Activated CD4-positive, alpha-beta T cell treated with anti-CD3 and anti-CD28 coated beads for 36 hours (primary cell): ENCODE measurements at regions of chr17 and their contacts with region 1.

Region 1: DNA sequence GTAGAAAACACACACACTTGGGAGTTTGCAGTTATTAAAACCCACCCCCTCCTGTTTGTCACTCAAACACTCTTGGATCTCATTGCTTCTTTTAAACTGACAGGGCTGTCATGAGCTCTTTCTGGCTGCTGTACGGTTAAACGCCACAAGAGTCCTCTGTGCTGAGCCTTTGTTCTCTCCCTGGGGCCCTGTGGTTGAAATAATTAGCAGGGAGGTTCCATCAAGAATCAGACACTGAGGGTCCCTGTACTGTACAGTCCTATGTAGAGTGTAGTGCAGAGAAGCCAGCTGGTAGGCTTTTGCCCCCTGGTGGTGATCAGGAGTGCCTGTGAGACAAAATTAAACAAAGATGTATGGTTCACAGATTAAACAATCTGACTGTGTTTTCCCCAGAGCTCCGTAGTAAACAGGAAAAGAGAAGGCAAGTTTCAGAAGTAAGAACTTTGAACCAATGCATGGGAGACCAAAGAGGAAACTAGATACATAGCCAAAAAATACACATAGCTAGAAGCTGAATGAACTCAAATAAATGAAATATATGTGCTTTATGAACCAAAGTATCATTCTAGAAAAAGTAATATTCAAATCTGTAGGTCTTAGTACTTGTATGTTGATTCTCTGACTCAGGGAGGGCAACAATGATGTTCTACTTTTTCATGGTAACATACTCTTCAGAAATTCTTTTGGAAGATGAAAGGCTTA is 1.4 kb upstream of the SSH2 start:
- DNase-seq: peak; percentile 80
- ATAC-seq: peak; percentile 66
- H3K4me3 Mint-ChIP-seq: no peak overlapping the region
- H3K27ac Mint-ChIP-seq: no peak overlapping the region
- H3K4me1 Mint-ChIP-seq: peaks cover 20% of the 10 kb centered on the region
- H3K27me3 Mint-ChIP-seq: no peaks in the 10 kb centered on the region

Region 2: GRCh38 chr17:29568331-29569244 is 362.8 kb before region 1 on chr17 and contains the start of gene TP53I13:
- CTCF ChIA-PET with region 1: interaction called, 3 read pairs
- POLR2A ChIA-PET with region 1: no interaction called
- intact Hi-C with region 1: loop called in 1 of 2 experiments (anchors 1 kb)
- DNase-seq: peak; percentile 96
- ATAC-seq: peak; percentile 64
- H3K4me3 Mint-ChIP-seq: peak within 1 kb of the TSS; percentile 97
- H3K27ac Mint-ChIP-seq: peak within 1 kb of the TSS; percentile 96
- H3K4me1 Mint-ChIP-seq: peaks cover 30% of the 10 kb centered on the region
- H3K27me3 Mint-ChIP-seq: no peaks in the 10 kb centered on the region
- total RNA-seq, gene TP53I13: 37.7 to 41.5 TPM

Region 3: DNA sequence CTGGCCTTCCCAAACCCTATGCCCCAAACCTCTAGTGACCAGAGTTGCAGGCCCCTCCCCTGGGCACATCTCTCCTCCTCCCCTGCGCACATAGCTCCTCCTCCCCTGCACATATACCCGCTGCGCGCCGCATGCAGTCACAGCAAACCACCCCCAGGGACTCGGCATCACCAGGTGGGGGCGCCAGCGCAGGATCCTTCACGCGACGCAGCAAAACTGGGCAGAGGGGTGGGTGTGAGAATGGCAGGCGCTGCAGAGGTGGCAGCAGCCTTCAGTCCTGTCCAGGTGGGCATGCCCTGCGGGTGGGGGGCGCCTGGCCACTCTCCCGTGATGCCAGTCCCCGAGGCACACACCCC is 314.3 kb before region 1 on chr17:
- CTCF ChIA-PET with region 1: interaction called, 27 read pairs
- POLR2A ChIA-PET with region 1: interaction called, 5 read pairs
- intact Hi-C with region 1: loop called in 1 of 2 experiments (anchors 1 kb)
- DNase-seq: peak; percentile 98
- ATAC-seq: peak; percentile 82
- H3K4me3 Mint-ChIP-seq: peak overlapping the region; percentile 75
- H3K27ac Mint-ChIP-seq: peak overlapping the region; percentile 89
- H3K4me1 Mint-ChIP-seq: peaks cover 47% of the 10 kb centered on the region
- H3K27me3 Mint-ChIP-seq: peaks cover 2% of the 10 kb centered on the region

Region 4: DNA sequence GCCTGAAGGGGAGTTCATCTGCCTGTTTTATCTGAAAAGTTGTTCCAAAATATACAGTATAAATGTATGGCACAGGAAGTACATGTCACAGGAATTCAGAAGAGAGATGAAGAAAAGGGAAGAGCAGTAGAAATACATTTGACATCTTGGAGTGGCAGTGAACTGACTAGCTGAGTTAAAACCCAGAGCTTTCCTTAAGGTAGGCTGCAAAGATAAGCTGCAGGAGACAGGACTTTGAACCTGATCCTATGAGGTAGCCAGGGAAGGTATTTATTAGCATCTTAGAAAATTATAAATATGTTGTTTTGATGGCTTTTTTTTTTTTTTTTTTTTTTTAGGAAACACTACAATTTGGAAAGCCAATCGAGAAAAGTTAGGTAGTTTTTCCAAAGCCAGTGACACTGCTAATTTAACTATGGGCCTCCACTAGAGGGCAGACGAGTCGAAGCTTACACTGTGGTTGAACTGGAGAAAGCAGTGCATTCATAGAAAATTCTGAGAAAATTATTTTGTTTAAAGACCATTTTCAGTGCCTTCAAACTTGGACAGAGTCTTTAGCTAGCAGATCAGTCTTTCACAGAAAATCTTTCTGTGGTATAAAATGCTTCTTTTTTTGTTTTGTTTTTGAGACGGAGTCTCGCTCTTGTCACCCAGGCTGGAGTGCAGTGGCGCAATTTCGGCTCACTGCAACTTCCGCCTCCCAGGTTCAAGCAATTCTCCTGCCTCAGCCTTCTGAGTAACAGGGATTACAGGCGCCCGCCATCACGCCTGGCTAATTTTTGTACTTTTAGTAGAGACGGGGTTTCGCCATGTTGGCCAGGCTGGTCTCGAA is 123.6 kb before region 1 on chr17:
- CTCF ChIA-PET with region 1: interaction called, 178 read pairs
- POLR2A ChIA-PET with region 1: no interaction called
- intact Hi-C with region 1: loop called (anchors 1 kb)
- DNase-seq: peak; percentile 83
- ATAC-seq: peak; percentile 74
- H3K4me3 Mint-ChIP-seq: no peak overlapping the region
- H3K27ac Mint-ChIP-seq: no peak overlapping the region
- H3K4me1 Mint-ChIP-seq: peaks cover 15% of the 10 kb centered on the region
- H3K27me3 Mint-ChIP-seq: no peaks in the 10 kb centered on the region

Region 5: DNA sequence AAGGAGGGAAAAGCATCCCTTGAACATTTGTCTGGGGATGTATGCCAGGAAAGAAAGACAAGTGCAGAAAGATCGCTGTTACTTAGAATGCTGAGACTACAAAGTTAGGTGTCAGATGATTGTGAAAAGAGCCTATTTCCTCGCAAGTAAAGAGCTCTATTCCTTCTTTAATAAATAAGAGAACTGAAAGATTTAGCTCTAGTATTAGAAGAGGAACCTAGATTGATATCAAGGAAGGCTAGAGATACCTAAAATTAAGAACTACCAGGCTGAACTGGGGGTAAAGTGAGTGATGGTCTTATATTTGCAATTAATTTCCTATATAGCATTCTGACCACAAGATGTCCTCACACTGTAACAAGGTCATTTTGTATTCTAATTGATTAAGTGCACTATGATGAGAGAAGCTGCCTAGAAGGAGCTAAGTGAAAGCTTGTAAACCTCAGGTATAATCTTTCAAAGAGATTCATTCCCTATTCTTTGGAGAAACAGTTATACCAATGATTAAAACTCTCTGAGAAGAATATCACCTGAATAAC is 63.7 kb before region 1 on chr17:
- CTCF ChIA-PET with region 1: interaction called, 21 read pairs
- POLR2A ChIA-PET with region 1: no interaction called
- intact Hi-C with region 1: loop called (anchors 1 to 2 kb)
- DNase-seq: no peak
- ATAC-seq: no peak
- H3K4me3 Mint-ChIP-seq: no peak overlapping the region
- H3K27ac Mint-ChIP-seq: no peak overlapping the region
- H3K4me1 Mint-ChIP-seq: peaks cover 14% of the 10 kb centered on the region
- H3K27me3 Mint-ChIP-seq: no peaks in the 10 kb centered on the region

Region 6: DNA sequence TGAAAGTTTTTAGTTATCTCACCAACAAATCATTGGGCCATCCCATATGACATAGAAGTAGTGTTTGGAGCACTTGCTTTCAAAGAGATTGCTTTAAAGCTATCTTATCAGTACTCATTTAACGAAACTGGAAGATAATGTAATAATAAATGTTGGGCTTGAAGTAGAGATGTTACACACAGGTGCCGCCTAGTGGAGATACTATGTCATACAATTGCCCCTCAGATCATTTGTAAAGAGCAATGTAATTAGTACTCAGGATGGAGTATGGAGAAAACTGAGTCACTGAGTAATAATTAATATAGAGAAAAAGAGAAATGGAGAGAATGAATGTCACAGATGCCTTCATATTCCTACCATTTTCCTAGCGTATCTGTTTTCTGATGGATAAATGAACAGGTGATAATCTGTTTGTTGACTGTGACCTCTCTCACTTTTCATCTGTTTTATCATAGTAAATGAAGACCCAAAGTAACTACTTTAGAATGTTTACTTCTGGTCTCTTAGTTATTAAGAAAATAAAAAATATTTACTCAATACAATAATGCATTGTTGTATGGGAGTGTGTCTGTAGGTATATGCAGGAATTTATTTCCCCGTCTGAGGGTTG is 90.4 kb after region 1 on chr17:
- CTCF ChIA-PET with region 1: interaction called, 7 read pairs
- POLR2A ChIA-PET with region 1: no interaction called
- intact Hi-C with region 1: loop called in 1 of 2 experiments (anchors 5 kb)
- DNase-seq: peak; percentile 47
- ATAC-seq: peak; percentile 64
- H3K4me3 Mint-ChIP-seq: no peak overlapping the region
- H3K27ac Mint-ChIP-seq: no peak overlapping the region
- H3K4me1 Mint-ChIP-seq: no peaks in the 10 kb centered on the region
- H3K27me3 Mint-ChIP-seq: peaks cover 2% of the 10 kb centered on the region